ENCODE measurements at regions of chr3 and their contacts with region 1.

Region 1: DNA sequence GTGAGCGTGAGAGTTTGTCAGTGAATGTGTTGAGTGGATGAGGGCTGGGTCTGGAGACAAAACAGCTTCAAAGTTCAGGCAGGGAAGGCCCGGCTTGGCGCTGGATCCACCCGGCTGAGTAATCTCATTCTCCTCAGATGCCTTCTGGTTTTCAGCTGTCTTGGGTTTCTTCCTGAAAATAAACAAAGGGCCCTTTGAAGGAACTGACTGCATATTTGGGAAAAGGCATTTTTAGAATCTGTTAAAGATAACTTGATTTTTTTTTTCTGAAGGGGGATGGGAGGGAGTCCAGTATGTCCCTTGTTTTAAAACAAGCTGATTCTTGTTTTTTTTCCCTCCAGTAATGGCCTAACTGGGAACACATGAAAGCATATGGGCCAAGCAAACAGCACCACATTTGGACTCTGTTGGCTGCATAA is 86.4 kb downstream of the TIGIT start:
- DNase-seq: peak; percentile 86
- ATAC-seq: peak; percentile 87

Region 2: GRCh38 chr3:114393367-114394072 is 13.3 kb after region 1 on chr3:
- intact Hi-C with region 1: no loop called
- DNase-seq: no peak
- ATAC-seq: peak; percentile 74

Region 3: GRCh38 chr3:114451561-114452018 is 71.3 kb after region 1 on chr3:
- intact Hi-C with region 1: loop called (anchors 2 kb)
- DNase-seq: peak; percentile 68
- ATAC-seq: peak; percentile 67

Measured in sciatic nerve (tissue), 2 donors.